ENCODE measurements at regions of chrX and their contacts with region 1.

Region 1: GRCh38 chrX:108699368-108699767 is 37.0 kb downstream of the IRS4 start:
- DNase-seq: peak; percentile 53
- H3K4me3 Mint-ChIP-seq: no peak overlapping the region
- H3K27ac Mint-ChIP-seq: no peak overlapping the region
- H3K4me1 Mint-ChIP-seq: no peaks in the 10 kb centered on the region
- H3K27me3 Mint-ChIP-seq: peaks cover 68% of the 10 kb centered on the region
- CTCF ChIP-seq: peak; percentile 42

Region 2: GRCh38 chrX:108712891-108713290 is 13.5 kb after region 1 on chrX:
- CTCF ChIA-PET with region 1: interaction called, 10 read pairs
- POLR2A ChIA-PET with region 1: interaction called, 3 read pairs
- intact Hi-C with region 1: no loop called
- DNase-seq: no peak
- H3K4me3 Mint-ChIP-seq: no peak overlapping the region
- H3K27ac Mint-ChIP-seq: no peak overlapping the region
- H3K4me1 Mint-ChIP-seq: no peaks in the 10 kb centered on the region
- H3K27me3 Mint-ChIP-seq: peaks cover 85% of the 10 kb centered on the region
- CTCF ChIP-seq: no peak

Region 3: GRCh38 chrX:109384699-109385098 is 685.3 kb after region 1 on chrX:
- CTCF ChIA-PET with region 1: interaction called, 47 read pairs
- POLR2A ChIA-PET with region 1: interaction called, 12 read pairs
- intact Hi-C with region 1: loop called (anchors 2 kb)
- DNase-seq: peak; percentile 54
- H3K4me3 Mint-ChIP-seq: no peak overlapping the region
- H3K27ac Mint-ChIP-seq: no peak overlapping the region
- H3K4me1 Mint-ChIP-seq: no peaks in the 10 kb centered on the region
- H3K27me3 Mint-ChIP-seq: peaks cover 35% of the 10 kb centered on the region
- CTCF ChIP-seq: peak; percentile 47

Region 4: GRCh38 chrX:109475174-109475891 is 776.0 kb after region 1 on chrX:
- CTCF ChIA-PET with region 1: interaction called, 3 read pairs
- POLR2A ChIA-PET with region 1: no interaction called
- intact Hi-C with region 1: loop called (anchors 5 kb)
- DNase-seq: peak; percentile 54
- H3K4me3 Mint-ChIP-seq: no peak overlapping the region
- H3K27ac Mint-ChIP-seq: no peak overlapping the region
- H3K4me1 Mint-ChIP-seq: peaks cover 9% of the 10 kb centered on the region
- H3K27me3 Mint-ChIP-seq: peaks cover 21% of the 10 kb centered on the region
- CTCF ChIP-seq: peak; percentile 19

Region 5: DNA sequence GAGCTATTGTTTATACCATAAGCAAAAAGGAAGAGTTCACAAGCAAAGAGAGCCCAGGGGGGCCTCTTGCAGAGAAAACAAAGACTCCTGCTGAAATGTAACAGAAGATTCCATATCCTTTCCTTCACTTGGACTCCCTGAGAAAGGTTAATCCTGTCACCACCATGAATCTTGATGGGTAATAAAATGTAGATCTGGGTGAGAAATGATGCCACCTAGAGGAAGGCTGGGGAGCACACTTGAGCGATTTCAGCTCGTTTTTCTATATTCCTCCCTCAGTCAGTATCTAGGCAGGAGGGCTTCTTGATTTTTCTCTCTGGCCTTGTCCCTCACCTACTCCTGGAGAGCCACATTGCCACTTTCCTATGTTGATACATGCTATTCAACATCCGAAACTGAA is 935.8 kb after region 1 on chrX:
- CTCF ChIA-PET with region 1: interaction called, 6 read pairs
- POLR2A ChIA-PET with region 1: no interaction called
- intact Hi-C with region 1: loop called (anchors 5 kb)
- DNase-seq: peak; percentile 31
- H3K4me3 Mint-ChIP-seq: no peak overlapping the region
- H3K27ac Mint-ChIP-seq: no peak overlapping the region
- H3K4me1 Mint-ChIP-seq: no peaks in the 10 kb centered on the region
- H3K27me3 Mint-ChIP-seq: peaks cover 23% of the 10 kb centered on the region
- CTCF ChIP-seq: no peak